ENCODE measurements at regions of chr6 and their contacts with region 1.

Region 1: DNA sequence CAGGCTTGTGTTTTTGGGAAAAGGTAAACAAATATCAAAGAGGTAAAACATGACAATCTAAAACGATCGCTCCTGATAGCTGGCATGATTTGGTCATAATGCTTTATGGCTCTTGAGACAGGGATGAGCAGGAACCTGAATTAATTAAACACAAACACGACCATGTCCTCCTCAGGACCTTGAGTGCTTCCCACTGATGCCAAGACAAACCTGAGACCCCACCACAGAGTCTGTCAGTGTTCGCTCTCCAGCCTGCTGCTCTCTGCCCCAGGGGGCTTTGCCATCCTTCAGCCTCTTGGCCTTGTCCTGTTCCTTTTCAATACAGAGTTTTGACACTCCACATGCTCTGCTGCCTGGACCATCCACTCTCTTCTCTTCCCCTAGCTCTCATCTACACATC is 119.4 kb downstream of the MAN1A1 start:
- DNase-seq: no peak
- ATAC-seq: no peak
- H3K4me3 ChIP-seq: no peak overlapping the region
- H3K27ac ChIP-seq: no peak overlapping the region
- H3K4me1 ChIP-seq: no peaks in the 10 kb centered on the region
- H3K27me3 ChIP-seq: no peaks in the 10 kb centered on the region
- CTCF ChIP-seq: no peak
- EP300 ChIP-seq: no peak
- POLR2A ChIP-seq: no peak
- RAD21 ChIP-seq: no peak

Region 2: DNA sequence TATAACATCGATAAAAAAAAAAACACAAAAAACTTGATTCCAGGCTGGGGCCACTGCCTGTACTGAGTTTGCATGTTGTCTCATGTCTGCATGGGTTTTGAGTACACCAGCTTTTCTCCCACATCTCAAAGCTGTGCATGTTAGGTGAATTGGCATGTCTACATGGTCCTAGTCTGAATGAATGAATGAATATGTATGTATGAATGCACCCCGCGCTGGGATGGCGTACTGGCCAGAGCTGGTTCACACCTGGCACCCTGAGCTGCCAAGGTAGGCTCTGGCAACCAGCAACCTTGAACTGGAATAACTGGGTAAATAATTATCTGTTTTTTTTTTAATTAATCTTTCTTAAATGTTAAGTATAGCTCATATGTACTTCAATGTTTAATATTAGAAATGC is 11.6 kb before region 1 on chr6:
- CTCF ChIA-PET with region 1: interaction called, 4 read pairs
- POLR2A ChIA-PET with region 1: interaction called, 3 read pairs
- RAD21 ChIA-PET with region 1: interaction called, 6 read pairs
- SMC1A ChIA-PET with region 1: interaction called, 10 read pairs
- in situ Hi-C with region 1: no loop called
- intact Hi-C with region 1: no loop called
- DNase-seq: no peak
- ATAC-seq: no peak
- H3K4me3 ChIP-seq: no peak overlapping the region
- H3K27ac ChIP-seq: no peak overlapping the region
- H3K4me1 ChIP-seq: no peaks in the 10 kb centered on the region
- H3K27me3 ChIP-seq: no peaks in the 10 kb centered on the region
- CTCF ChIP-seq: no peak
- EP300 ChIP-seq: no peak
- POLR2A ChIP-seq: no peak
- RAD21 ChIP-seq: no peak

Region 3: DNA sequence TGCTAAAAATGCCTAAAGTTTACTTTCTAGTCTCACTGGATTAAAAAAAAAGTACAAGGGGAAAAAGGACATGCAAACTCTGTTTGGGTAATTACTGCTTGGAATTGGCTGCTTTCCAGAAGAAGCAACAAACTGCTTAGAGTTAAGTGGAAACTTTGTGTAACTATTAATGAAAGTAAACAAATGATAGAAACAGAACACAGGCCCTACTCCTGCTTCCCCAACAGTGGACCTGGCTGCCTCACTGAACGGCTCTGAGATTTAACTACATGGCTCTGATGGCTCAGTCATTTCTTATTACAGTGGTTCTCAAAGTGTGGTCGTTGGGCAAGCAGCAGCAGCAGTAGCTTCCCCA is 10.9 kb after region 1 on chr6:
- CTCF ChIA-PET with region 1: interaction called, 5 read pairs
- POLR2A ChIA-PET with region 1: interaction called, 3 read pairs
- RAD21 ChIA-PET with region 1: interaction called, 3 read pairs
- SMC1A ChIA-PET with region 1: interaction called, 13 read pairs
- in situ Hi-C with region 1: no loop called
- intact Hi-C with region 1: no loop called
- DNase-seq: peak; percentile 8
- ATAC-seq: peak; percentile 50
- H3K4me3 ChIP-seq: no peak overlapping the region
- H3K27ac ChIP-seq: no peak overlapping the region
- H3K4me1 ChIP-seq: no peaks in the 10 kb centered on the region
- H3K27me3 ChIP-seq: no peaks in the 10 kb centered on the region
- CTCF ChIP-seq: no peak
- EP300 ChIP-seq: no peak
- POLR2A ChIP-seq: no peak
- RAD21 ChIP-seq: no peak

Region 4: DNA sequence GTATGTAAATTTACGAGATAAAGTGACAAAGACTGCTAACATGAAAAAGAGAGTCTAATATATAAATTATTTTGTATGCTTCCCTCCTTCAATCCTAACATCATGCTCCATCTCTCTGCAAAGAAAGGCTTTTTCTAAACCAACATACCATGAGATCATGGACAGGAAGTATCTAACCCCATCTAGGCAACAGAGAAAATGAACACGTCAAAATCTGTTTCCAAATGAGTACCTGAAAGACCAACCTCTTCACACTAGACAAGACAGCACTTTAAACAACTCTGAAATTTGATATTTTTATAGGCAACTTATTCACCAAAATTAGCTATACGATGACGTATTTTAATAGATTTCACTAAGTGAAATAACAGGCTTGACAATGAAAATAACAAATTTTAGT is 64.8 kb after region 1 on chr6:
- CTCF ChIA-PET with region 1: no interaction called
- POLR2A ChIA-PET with region 1: no interaction called
- RAD21 ChIA-PET with region 1: no interaction called
- SMC1A ChIA-PET with region 1: no interaction called
- in situ Hi-C with region 1: no loop called
- intact Hi-C with region 1: no loop called
- DNase-seq: no peak
- ATAC-seq: peak; percentile 96
- H3K4me3 ChIP-seq: no peak overlapping the region
- H3K27ac ChIP-seq: no peak overlapping the region
- H3K4me1 ChIP-seq: no peaks in the 10 kb centered on the region
- H3K27me3 ChIP-seq: no peaks in the 10 kb centered on the region
- CTCF ChIP-seq: no peak
- EP300 ChIP-seq: peak; percentile 29 to 48; a peak in 2 of 4 replicates
- POLR2A ChIP-seq: no peak
- RAD21 ChIP-seq: no peak

Region 5: DNA sequence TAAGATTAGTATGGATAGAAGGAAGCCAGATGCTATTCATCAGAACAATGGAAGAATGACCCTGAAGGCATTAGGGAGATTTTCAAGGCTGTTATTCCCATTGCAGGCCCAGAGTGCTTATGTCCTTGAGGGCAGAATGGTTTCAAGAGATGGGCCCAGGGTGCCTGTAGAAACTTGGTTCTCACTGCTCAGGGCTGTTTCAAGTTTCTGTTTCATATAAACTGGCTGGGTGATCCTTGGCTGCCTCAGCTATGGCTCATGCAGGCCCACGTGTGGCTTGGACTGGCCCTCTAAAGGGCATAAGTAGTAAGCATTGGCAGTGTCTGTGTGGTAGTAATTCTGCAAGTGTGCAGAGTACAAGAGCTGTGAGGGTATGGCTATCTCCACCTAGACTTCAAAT is 660.3 kb after region 1 on chr6:
- CTCF ChIA-PET with region 1: no interaction called
- POLR2A ChIA-PET with region 1: no interaction called
- RAD21 ChIA-PET with region 1: no interaction called
- SMC1A ChIA-PET with region 1: no interaction called
- in situ Hi-C with region 1: no loop called
- intact Hi-C with region 1: no loop called
- DNase-seq: no peak
- ATAC-seq: peak; percentile 20; the same call in 1 of the 3 replicates
- H3K4me3 ChIP-seq: no peak overlapping the region
- H3K27ac ChIP-seq: no peak overlapping the region
- H3K4me1 ChIP-seq: no peaks in the 10 kb centered on the region
- H3K27me3 ChIP-seq: no peaks in the 10 kb centered on the region
- CTCF ChIP-seq: no peak
- EP300 ChIP-seq: no peak
- POLR2A ChIP-seq: no peak
- RAD21 ChIP-seq: no peak

Measured in GM12878 (cell line).